Activated T-helper 1 cell treated with anti-CD3 and anti-CD28 coated beads, Interleukin-12 subunit alpha, Interleukin-12 subunit beta, Interleukin-2, Interleukin-4 antibody, amounts not matched to agents 30 ng/mL and 10 ng/mL and 1 ng/mL, durations not matched to agents 14 hours and 24 hours and 36 hours (primary cell): ENCODE measurements at regions of chr9 and their contacts with region 1.

Region 1: DNA sequence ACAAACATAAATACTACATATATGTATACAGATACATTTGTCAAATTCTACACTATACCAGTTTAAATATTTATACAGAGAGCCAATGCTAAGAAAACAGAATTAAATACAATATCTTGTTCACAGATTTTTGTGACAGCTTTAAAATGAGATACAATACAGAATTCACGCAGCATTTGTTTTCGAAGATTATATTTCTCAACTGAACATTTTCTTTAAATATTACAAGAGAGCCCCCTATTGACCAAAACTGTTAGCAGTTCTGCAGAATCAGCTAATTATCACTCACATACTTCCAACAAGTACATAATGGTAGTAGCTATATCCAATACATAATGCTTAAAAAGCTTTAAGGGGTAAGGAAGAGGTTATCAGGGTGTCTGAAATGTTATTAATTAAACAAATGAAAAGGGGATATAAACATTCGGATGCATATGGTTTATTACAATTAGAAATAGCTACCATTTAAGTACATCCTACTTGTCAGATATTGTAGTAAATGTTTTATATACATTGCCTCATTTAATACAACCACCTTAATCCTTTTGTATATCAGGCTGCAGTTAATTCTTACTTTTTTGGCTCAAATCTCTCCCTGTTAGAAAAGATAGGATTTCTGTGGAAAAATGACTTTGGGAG is 31.7 kb downstream of the ZDHHC21 start:
- DNase-seq: no peak
- H3K4me3 Mint-ChIP-seq: no peak overlapping the region
- H3K27ac Mint-ChIP-seq: no peak overlapping the region
- H3K4me1 Mint-ChIP-seq: no peaks in the 10 kb centered on the region
- H3K27me3 Mint-ChIP-seq: no peaks in the 10 kb centered on the region

Region 2: DNA sequence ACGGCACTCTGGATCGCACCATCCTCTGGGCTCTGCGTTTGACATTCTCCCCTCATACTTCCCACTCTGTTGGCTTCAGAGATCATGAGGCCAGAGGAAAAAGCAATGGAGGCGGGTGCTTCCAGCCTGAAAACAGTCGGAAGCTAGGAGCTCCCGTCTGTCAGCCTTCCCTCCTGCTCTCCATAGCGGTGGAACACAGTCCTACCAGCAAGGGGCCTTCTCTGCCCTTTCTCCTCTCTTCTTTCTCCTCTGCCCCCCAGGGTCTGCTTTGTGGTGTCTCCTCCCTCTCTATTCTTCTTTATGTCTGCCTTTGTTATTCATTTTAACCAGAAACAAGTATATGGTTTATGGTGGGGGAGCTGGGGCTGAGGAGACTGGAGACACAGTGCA is 195.1 kb before region 1 on chr9:
- intact Hi-C with region 1: loop called (anchors 2 kb)
- DNase-seq: no peak
- H3K4me3 Mint-ChIP-seq: no peak overlapping the region
- H3K27ac Mint-ChIP-seq: no peak overlapping the region
- H3K4me1 Mint-ChIP-seq: no peaks in the 10 kb centered on the region
- H3K27me3 Mint-ChIP-seq: no peaks in the 10 kb centered on the region